ENCODE measurements at regions of chr5 and their contacts with region 1.

Region 1: DNA sequence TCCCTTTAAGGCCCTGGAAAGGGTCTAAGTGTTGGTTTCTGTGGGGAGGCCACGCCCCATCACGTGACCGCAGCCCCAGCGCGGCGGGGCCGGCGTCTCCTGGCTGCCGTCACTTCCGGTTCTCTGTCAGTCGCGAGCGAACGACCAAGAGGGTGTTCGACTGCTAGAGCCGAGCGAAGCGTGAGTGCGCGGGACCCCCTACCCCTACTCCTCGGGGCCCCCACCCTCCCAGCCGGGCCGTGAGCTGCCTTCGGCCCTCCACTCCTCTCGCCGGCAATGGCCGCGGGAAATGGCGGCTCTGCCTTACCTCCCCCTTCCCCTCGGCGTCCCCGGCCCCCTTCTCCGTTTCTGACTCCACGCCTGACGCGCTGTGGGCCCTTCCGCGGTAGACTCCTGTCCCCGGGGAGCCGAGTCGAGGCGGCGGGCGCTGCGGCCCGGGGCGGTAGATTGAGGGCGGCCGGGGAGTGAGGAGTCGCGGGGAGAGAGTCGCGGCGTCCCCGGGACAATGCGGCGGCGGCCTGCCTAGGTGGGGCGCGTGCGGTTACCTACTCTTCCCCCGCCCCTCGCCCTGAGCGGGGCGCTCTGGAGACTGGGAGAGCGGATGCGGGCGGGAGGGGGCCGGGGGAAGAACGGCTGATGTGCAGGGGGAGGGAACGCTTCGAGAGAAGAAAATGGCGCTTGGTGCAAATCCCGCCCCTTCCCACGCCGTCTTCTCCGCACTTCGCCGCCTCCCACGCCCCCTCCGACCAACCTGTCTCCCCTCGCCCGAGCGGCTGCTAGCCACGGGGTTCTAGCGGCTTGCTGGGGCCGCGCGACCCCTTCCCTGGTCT is at the start of gene SUB1:
- DNase-seq: peak; percentile 53
- H3K4me3 ChIP-seq: peak within 1 kb of the TSS; percentile 82 to 100 (median 97)
- H3K27ac ChIP-seq: peak within 1 kb of the TSS; percentile 98 to 100 (median 100)
- H3K4me1 ChIP-seq: peaks cover 8 to 63% (median 21%) of the 10 kb centered on the region in 3 donors
- H3K27me3 ChIP-seq: no peaks in the 10 kb centered on the region
- CTCF ChIP-seq: peak in 2 of 6 experiments; percentile 7 to 16
- POLR2A ChIP-seq: peak in 3 of 4 donors; percentile 59 to 93 (median 73)
- total RNA-seq, gene SUB1: 59.6 to 280 (median 134) TPM

Region 2: GRCh38 chr5:32190095-32190494 is 395.6 kb before region 1 on chr5:
- intact Hi-C with region 1: no loop called
- DNase-seq: no peak
- H3K4me3 ChIP-seq: no peak overlapping the region
- H3K27ac ChIP-seq: no peak overlapping the region
- H3K4me1 ChIP-seq: peaks cover 0 to 11% (median 6%) of the 10 kb centered on the region in 3 donors
- H3K27me3 ChIP-seq: no peaks in the 10 kb centered on the region
- CTCF ChIP-seq: no peak
- POLR2A ChIP-seq: no peak

Region 3: DNA sequence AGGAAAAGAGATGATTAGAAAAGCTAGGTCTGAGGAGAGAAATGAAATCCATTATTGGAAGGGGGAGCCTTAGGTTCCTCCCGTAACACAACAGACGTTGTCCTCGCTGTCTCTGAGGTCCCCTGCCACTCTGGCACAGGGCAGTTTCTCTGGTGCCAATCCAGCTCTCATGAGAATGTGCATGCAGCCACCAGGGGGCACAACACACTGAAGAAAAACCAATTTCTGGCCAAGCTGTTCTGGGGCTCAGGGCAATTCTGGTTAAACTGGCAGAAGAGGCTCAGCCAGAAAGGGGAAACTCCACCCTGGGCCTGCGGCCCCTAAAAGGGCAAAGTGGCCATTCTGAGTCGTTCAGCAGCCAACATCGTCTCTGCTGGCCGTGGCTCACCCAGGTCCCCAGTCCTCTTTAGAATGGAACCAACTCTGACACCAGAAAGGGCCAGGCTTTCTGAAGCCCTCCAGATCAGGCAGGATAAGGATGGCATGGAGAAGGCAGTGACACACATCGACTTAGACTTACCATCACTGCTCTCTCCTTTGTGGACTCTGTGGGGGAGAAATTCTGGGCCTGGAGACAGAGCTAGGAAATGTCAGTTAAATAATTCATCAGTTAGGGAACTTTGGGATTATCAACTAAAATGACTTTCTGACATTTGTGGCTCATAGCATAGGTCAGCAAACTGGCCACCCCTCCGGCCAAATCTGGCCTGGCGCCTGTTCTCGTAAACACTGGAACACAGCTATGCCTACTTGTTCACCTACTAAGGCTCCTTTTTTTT is 353.0 kb before region 1 on chr5:
- intact Hi-C with region 1: loop called (anchors 10 kb)
- DNase-seq: no peak
- H3K4me3 ChIP-seq: no peak overlapping the region
- H3K27ac ChIP-seq: peak overlapping the region; percentile 36 to 74 (median 66)
- H3K4me1 ChIP-seq: peaks cover 15 to 53% (median 26%) of the 10 kb centered on the region in 3 donors
- H3K27me3 ChIP-seq: no peaks in the 10 kb centered on the region
- CTCF ChIP-seq: peak; percentile 82 to 93 (median 87)
- POLR2A ChIP-seq: no peak

Region 4: DNA sequence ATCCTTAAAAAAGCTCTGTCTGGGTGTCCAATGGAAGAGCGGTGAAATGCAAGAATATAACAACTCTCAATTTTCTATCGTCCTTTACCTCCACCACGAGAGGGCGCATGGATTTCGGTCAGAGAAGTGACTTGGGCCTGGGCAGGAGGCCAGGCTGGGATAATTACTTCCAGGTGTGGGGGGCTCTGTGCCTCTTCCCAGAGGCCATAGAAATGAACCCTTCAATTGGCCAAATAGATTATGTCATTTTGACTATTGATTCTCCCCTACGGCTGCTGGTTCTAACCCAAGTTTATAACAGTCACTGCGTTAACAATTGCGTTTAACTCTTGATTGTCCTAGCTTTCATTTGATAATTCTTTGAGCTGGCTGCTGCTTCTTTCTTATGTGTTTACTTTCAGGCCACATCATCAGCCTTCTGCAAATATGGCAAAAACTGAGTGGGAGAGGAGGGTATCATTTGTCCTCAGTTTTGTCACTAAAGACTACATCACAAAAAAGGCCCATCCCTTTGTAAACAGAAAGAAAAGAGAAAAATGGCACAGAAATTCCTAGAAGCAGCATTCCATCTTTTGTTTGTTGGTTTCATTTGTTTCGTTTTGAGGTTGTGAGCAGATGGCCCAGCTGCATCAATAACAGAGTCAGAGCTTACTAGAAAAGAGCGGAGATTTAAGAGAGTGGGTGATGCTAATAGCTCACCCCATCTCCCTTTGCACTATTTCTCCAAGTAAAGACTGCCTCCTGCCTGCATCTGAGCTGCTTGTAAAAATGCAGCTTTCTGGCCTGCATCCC is 95.7 kb before region 1 on chr5:
- intact Hi-C with region 1: loop called (anchors 5 kb)
- DNase-seq: no peak
- H3K4me3 ChIP-seq: no peak overlapping the region
- H3K27ac ChIP-seq: no peak overlapping the region
- H3K4me1 ChIP-seq: peaks cover 0 to 10% (median 5%) of the 10 kb centered on the region in 3 donors
- H3K27me3 ChIP-seq: no peaks in the 10 kb centered on the region
- CTCF ChIP-seq: peak; percentile 66 to 77 (median 70)
- POLR2A ChIP-seq: no peak